ENCODE measurements at regions of chrX and their contacts with region 1.

Region 1: GRCh38 chrX:19535476-19535875 is 20.2 kb upstream of the MAP3K15 start:
- DNase-seq: peak in 1 of 2 experiments; percentile 38
- H3K4me3 ChIP-seq: no peak overlapping the region
- H3K27ac ChIP-seq: no peak overlapping the region
- H3K4me1 ChIP-seq: no peaks in the 10 kb centered on the region
- H3K27me3 ChIP-seq: no peaks in the 10 kb centered on the region
- CTCF ChIP-seq: peak; percentile 57

Region 2: GRCh38 chrX:19382555-19383145 is 152.8 kb before region 1 on chrX:
- CTCF ChIA-PET with region 1: interaction called, 13 read pairs
- POLR2A ChIA-PET with region 1: no interaction called
- intact Hi-C with region 1: no loop called
- DNase-seq: peak; percentile 27 to 40
- H3K4me3 ChIP-seq: no peak overlapping the region
- H3K27ac ChIP-seq: no peak overlapping the region
- H3K4me1 ChIP-seq: no peaks in the 10 kb centered on the region
- H3K27me3 ChIP-seq: 0 out of 2 replicates have a peak, but pooled peaks cover 4% of the 10 kb centered on the region
- CTCF ChIP-seq: peak; percentile 69